Activated CD4-positive, alpha-beta T cell treated with anti-CD3 and anti-CD28 coated beads, Interleukin-2, amount 10 ng/mL, durations not matched to agents 24 days and 14 days (primary cell): ENCODE measurements at regions of chr3 and their contacts with region 1.

Region 1: GRCh38 chr3:107522510-107523288 is at the start of gene BBX:
- DNase-seq: peak; percentile 98
- H3K4me3 Mint-ChIP-seq: peak within 1 kb of the TSS; percentile 97
- H3K27ac Mint-ChIP-seq: peak within 1 kb of the TSS; percentile 94
- H3K4me1 Mint-ChIP-seq: peaks cover 25% of the 10 kb centered on the region
- H3K27me3 Mint-ChIP-seq: peaks cover 7% of the 10 kb centered on the region
- total RNA-seq, gene BBX: 37.2 and 39.6 TPM in 2 replicates

Region 2: DNA sequence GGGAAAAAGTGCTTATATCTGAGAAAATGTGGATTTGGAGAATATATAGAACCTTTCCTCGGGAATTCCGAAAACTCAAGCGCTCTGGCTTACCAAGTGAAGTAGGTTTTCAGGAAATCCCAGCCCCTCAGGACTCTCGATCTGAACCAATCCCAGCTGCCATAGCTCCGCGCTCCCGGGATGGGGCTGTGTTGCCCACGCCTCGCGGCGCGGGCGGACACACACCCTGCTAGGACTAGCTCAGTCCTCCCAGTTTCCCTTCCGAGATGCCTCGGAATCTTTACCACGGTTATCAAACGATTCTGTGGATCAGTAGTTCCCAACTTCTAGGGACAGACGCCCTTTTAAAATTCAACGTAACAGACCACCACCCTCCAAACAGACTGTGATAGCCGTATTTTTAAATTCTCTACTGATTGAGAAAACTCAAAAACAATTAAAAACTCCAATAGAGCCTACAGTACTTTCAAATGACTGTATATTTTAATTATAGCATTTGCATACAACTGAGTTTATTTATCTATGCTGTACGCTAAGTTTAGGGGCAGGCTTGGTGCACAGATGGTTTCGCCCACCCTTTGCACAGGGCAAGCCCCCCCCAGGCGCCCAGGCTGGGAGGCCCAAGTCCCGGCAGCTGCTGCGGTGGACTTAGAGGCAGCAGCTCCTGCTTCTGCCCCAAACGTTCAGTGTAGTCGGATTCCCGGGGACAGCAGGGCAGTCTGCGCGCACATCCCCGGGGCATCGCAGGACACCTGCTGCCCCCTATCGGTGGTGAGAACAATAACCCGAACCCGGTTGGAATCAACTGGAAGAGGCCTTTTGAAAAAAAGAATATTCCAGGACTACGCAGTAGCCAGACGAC is 93.1 kb before region 1 on chr3:
- intact Hi-C with region 1: loop called (anchors 1 kb)
- DNase-seq: peak; percentile 87
- H3K4me3 Mint-ChIP-seq: peak overlapping the region; percentile 82
- H3K27ac Mint-ChIP-seq: peak overlapping the region; percentile 45
- H3K4me1 Mint-ChIP-seq: peaks cover 14% of the 10 kb centered on the region
- H3K27me3 Mint-ChIP-seq: peaks cover 51% of the 10 kb centered on the region

Region 3: GRCh38 chr3:107598926-107599771 is 76.5 kb after region 1 on chr3:
- intact Hi-C with region 1: loop called (anchors 1 kb)
- DNase-seq: peak; percentile 84
- H3K4me3 Mint-ChIP-seq: peak overlapping the region; percentile 82
- H3K27ac Mint-ChIP-seq: peak overlapping the region; percentile 78
- H3K4me1 Mint-ChIP-seq: peaks cover 34% of the 10 kb centered on the region
- H3K27me3 Mint-ChIP-seq: no peaks in the 10 kb centered on the region

Region 4: GRCh38 chr3:107660306-107660976 is 137.7 kb after region 1 on chr3:
- intact Hi-C with region 1: loop called (anchors 5 kb)
- DNase-seq: no peak
- H3K4me3 Mint-ChIP-seq: no peak overlapping the region
- H3K27ac Mint-ChIP-seq: no peak overlapping the region
- H3K4me1 Mint-ChIP-seq: peaks cover 10% of the 10 kb centered on the region
- H3K27me3 Mint-ChIP-seq: no peaks in the 10 kb centered on the region

Region 5: GRCh38 chr3:108114423-108115065 is 591.8 kb after region 1 on chr3:
- intact Hi-C with region 1: no loop called
- DNase-seq: no peak
- H3K4me3 Mint-ChIP-seq: no peak overlapping the region
- H3K27ac Mint-ChIP-seq: no peak overlapping the region
- H3K4me1 Mint-ChIP-seq: peaks cover 20% of the 10 kb centered on the region
- H3K27me3 Mint-ChIP-seq: peaks cover 15% of the 10 kb centered on the region

Region 6: DNA sequence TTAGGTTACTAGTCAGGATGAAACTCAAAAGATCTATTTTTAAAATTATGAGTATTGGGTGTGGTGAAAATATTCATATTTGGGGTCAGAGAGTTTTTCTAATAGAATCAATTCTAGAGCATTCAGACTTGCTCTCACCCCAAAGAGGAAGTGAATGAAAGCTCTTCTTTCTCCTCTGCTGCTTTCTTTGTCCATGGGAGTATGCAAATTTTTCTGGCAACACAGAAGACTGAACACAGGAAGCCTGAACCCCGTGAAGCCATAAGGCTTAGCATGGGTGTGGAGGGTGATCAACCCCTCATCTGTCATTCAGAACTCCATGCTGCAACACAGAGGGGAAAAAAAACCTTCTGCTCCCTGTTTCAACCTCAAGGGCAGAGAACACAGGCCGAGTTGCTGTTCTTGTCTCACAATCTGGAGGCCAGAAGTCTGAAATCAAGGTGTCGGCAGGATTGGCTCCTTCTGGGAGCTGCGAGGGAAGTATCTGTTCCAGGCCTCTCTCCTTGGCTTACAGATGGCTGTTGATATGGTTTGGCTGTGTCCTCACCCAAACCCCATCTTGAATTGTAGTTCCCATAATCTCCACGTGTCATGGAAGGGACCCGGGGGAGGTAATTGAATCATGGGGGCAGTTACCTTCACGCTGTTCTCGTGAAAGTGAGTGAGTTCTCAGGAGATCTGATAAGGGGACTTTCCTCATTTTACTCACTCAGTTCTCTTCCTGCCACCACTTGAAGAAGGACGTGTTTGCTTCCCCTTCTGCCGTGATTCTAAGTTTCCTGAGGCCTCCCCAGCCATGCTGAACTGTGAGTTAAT is 601.8 kb after region 1 on chr3:
- intact Hi-C with region 1: loop called (anchors 10 kb)
- DNase-seq: peak; percentile 91
- H3K4me3 Mint-ChIP-seq: peak overlapping the region; percentile 96
- H3K27ac Mint-ChIP-seq: peak overlapping the region; percentile 99
- H3K4me1 Mint-ChIP-seq: peaks cover 53% of the 10 kb centered on the region
- H3K27me3 Mint-ChIP-seq: no peaks in the 10 kb centered on the region

Region 7: DNA sequence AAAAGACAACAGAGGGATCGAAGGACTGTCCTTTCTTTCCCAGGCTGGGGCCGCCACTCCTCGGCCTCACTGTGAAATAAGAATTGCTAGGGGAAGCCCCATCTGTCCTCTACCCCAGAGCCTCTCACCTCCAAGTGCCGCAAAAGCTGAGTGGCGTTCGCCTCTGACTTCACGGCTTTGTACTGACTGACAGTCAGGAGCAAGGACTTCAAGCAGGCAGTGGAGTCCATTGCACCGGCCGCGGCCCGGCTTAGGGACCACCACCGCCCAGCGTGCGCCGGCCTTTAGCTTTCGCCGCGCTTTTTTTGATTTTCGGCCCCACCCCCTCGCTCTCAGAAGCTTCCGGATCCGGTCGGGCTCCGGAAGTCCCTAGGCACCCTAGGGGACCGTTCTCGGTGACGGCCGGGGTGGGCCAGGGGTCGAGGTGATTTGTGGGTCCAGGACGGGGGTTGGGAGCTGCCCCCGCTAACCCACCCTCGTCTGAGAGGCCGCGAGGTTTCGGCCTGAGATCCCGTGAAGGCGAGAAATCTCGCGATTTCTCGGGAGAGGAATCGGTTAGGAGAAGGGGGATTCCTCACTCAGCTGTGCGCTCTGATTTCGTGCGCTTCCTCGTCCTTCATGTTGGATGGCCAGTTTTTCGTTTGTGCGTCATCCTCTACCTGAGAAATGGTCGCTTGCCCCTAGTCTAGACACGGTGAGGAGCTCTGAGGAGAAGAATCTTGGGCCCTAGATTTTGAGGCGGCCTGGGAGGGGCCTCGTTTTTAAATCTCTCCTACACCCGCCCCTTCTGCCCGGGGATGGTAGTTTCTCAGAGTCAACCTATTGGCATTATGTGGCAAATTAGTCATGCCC is 1066.7 kb after region 1 on chr3 and contains the starts of genes CIP2A and DZIP3:
- intact Hi-C with region 1: loop called (anchors 10 kb)
- DNase-seq: peak; percentile 95
- H3K4me3 Mint-ChIP-seq: peak within 1 kb of the TSS; percentile 97
- H3K27ac Mint-ChIP-seq: peak within 1 kb of the TSS; percentile 98
- H3K4me1 Mint-ChIP-seq: peaks cover 45% of the 10 kb centered on the region
- H3K27me3 Mint-ChIP-seq: no peaks in the 10 kb centered on the region
- total RNA-seq, gene CIP2A: 48.3 and 58.3 TPM in 2 replicates
- total RNA-seq, gene DZIP3: 4.1 and 4.7 TPM in 2 replicates

Region 8: GRCh38 chr3:108835101-108835500 is 1312.4 kb after region 1 on chr3:
- intact Hi-C with region 1: loop called (anchors 10 kb)
- DNase-seq: peak; percentile 86
- H3K4me3 Mint-ChIP-seq: peak overlapping the region; percentile 90
- H3K27ac Mint-ChIP-seq: peak overlapping the region; percentile 98
- H3K4me1 Mint-ChIP-seq: peaks cover 70% of the 10 kb centered on the region
- H3K27me3 Mint-ChIP-seq: no peaks in the 10 kb centered on the region